Mammary epithelial cell (primary cell): ENCODE measurements at regions of chr4 and their contacts with region 1.

Region 1: GRCh38 chr4:53196882-53197771 is 168.7 kb downstream of the SCFD2 start:
- DNase-seq: peak; percentile 47
- H3K4me3 ChIP-seq: no peak overlapping the region
- H3K27ac ChIP-seq: no peak overlapping the region
- H3K4me1 ChIP-seq: no peaks in the 10 kb centered on the region
- H3K27me3 ChIP-seq: no peaks in the 10 kb centered on the region
- CTCF ChIP-seq: peak; percentile 48 to 75

Region 2: DNA sequence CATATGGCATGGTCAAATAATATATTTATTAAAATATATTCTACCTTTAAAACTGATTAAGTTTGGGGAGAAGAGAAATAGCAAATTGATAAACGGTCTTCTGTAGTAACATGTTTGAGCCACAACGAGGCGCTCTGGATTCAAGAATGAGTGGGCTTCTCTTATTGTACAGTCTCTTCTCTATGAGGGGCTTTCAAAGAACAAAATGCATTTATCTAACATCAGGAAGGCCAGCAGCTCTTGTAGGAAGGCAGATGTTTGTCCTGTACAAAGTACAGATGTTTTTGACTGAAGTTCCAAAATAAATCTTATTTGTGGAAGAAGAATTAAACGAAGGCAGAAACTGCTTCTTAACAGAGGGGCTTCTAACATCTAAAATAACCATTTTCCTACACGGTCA is 181.4 kb before region 1 on chr4:
- CTCF ChIA-PET with region 1: interaction called, 3 read pairs
- dilution Hi-C with region 1: no loop called
- in situ Hi-C with region 1: no loop called
- intact Hi-C with region 1: loop called (anchors 2 kb)
- DNase-seq: no peak
- H3K4me3 ChIP-seq: no peak overlapping the region
- H3K27ac ChIP-seq: no peak overlapping the region
- H3K4me1 ChIP-seq: no peaks in the 10 kb centered on the region
- H3K27me3 ChIP-seq: no peaks in the 10 kb centered on the region
- CTCF ChIP-seq: peak; percentile 59 to 64

Region 3: DNA sequence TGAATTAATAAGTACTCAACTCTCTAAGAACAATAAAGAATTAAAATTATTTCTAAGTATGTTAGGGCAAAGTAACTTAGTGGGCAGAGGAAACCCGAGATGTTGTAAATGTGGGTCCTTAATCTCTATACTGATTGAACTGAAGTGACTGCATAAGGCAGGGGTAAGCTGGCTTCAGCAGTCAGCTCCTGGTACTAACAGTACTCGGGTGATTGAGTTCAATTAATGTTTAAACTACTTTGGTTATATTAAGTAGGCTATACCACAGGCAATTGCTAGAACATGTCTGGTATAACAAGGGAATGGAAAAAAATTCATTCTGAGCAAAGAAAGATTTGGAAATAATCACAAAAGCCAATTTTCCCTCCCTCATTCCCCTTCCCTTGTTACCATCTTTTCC is 303.4 kb after region 1 on chr4:
- CTCF ChIA-PET with region 1: no interaction called
- dilution Hi-C with region 1: no loop called
- in situ Hi-C with region 1: no loop called
- intact Hi-C with region 1: loop called (anchors 5 kb)
- DNase-seq: no peak
- H3K4me3 ChIP-seq: no peak overlapping the region
- H3K27ac ChIP-seq: no peak overlapping the region
- H3K4me1 ChIP-seq: no peaks in the 10 kb centered on the region
- H3K27me3 ChIP-seq: no peaks in the 10 kb centered on the region
- CTCF ChIP-seq: no peak

Region 4: GRCh38 chr4:53702334-53703266 is 505.5 kb after region 1 on chr4:
- CTCF ChIA-PET with region 1: no interaction called
- dilution Hi-C with region 1: no loop called
- in situ Hi-C with region 1: no loop called
- intact Hi-C with region 1: loop called (anchors 2 kb)
- DNase-seq: peak; percentile 52
- H3K4me3 ChIP-seq: peak overlapping the region in 2 of 3 experiments; percentile 17 to 20
- H3K27ac ChIP-seq: no peak overlapping the region
- H3K4me1 ChIP-seq: peaks cover 11% of the 10 kb centered on the region
- H3K27me3 ChIP-seq: no peaks in the 10 kb centered on the region
- CTCF ChIP-seq: peak in 1 of 2 donors; percentile 7

Region 5: DNA sequence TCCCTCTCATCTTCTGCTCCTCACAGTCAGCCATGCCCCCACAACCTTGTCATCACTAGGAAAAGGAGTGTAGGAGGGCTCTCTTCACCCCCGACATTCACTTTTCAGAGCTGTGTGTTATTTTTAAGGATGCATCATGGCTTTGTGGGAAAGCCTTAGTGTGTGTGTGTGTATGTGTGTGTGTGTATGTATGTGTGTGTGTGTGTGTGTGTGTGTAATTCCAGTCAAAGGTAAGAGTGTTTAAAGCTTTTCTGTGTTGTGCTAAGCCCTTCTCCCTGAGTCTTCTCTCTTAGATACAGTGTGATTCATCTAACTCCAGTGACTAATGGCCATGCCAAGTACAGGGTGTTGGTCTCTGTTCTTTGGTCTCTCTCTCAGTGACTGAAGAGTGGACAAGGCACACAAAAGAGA is 790.6 kb after region 1 on chr4:
- CTCF ChIA-PET with region 1: interaction called, 14 read pairs
- dilution Hi-C with region 1: no loop called
- in situ Hi-C with region 1: no loop called
- intact Hi-C with region 1: no loop called
- DNase-seq: peak; percentile 88
- H3K4me3 ChIP-seq: no peak overlapping the region
- H3K27ac ChIP-seq: peak overlapping the region; percentile 30
- H3K4me1 ChIP-seq: peaks cover 34% of the 10 kb centered on the region
- H3K27me3 ChIP-seq: no peaks in the 10 kb centered on the region
- CTCF ChIP-seq: no peak